Transverse colon (tissue), 4 donors: ENCODE measurements at regions of chr14 and their contacts with region 1.

Region 1: GRCh38 chr14:95561001-95561412 is 26.2 kb downstream of the GLRX5 start:
- DNase-seq: peak; percentile 91
- H3K4me3 ChIP-seq: no peak overlapping the region
- H3K27ac ChIP-seq: no peak overlapping the region
- H3K4me1 ChIP-seq: no peaks in the 10 kb centered on the region
- H3K27me3 ChIP-seq: no peaks in the 10 kb centered on the region
- CTCF ChIP-seq: peak; percentile 91 to 99 (median 96)
- EP300 ChIP-seq: no peak
- POLR2A ChIP-seq: no peak

Region 2: DNA sequence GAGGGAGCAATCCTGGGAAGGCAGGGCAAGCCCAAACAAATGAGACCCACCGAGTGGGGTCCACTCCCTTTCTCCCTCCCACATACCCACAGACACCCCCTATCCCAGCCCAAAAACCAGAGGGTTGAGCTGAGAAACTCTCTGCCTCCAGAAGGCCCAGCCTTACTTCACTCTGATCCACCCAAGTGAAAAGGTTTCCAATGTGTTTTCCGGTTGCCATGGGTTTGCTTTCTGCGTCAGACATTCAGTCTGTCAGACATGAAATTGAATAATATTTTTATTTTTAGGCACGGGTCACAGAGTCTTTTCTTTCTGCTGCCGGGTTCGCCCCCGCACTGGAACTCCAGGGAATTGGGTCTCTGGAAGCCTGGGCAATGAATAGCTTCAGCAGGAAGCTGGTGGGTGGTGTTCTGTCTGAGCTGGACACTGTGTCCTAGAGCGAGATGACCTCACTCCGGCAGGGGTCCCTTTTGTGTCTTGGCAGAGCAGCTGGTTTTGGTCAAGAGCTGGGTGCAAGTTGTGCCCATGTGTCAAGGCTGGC is 171.5 kb before region 1 on chr14:
- in situ Hi-C with region 1: no loop called
- intact Hi-C with region 1: no loop called
- DNase-seq: no peak
- H3K4me3 ChIP-seq: no peak overlapping the region
- H3K27ac ChIP-seq: no peak overlapping the region
- H3K4me1 ChIP-seq: no peaks in the 10 kb centered on the region
- H3K27me3 ChIP-seq: no peaks in the 10 kb centered on the region
- CTCF ChIP-seq: no peak
- EP300 ChIP-seq: peak; percentile 48
- POLR2A ChIP-seq: no peak

Region 3: DNA sequence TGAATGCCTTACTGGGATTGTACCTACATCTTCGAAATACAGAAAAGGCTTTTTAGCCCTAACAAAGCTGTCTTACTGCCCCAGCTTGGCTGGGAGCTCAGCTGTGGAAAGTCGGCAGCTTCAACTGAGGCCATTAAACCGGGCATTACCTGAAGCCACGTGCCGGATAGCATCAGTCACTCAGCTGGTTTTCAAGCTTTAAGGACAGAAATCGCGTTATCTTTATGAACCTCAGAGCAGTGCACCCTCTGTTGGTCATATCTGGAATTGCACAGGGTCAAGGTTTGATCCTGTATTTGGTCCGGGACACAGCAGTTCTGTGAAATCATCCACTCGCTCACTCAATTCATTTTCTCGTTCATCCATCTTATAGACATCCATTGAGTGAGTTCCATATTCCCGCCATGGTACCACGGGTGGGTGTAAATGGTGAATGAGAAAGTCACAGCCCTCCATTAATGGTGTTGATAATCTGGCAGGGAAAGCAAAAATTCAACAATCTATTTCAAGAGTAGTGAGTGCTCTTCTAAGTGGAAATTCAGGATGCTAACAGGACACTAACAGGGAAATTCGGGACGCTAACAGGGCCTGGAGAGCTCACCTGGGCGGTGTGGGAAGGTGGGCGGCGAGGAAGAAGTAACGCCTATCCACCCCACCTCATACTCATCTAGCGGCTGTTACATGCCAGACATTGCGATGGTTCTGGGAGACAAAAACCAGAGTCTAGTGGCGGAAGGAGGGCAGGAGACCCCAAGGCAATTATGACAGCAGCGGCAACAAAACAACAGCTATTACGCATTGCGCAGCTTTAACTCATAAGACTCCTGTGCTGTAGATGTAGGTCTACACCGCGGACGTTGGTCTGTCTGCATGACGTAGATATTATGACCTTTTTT is 213.5 kb after region 1 on chr14:
- in situ Hi-C with region 1: loop called in 2 of 4 experiments (anchors 10 kb)
- intact Hi-C with region 1: no loop called
- DNase-seq: peak; percentile 31
- H3K4me3 ChIP-seq: no peak overlapping the region
- H3K27ac ChIP-seq: no peak overlapping the region
- H3K4me1 ChIP-seq: no peaks in the 10 kb centered on the region
- H3K27me3 ChIP-seq: no peaks in the 10 kb centered on the region
- CTCF ChIP-seq: peak; percentile 69 to 86 (median 83)
- EP300 ChIP-seq: no peak
- POLR2A ChIP-seq: no peak

Region 4: GRCh38 chr14:95993768-95994592 is 433.0 kb after region 1 on chr14:
- in situ Hi-C with region 1: loop called (anchors 10 to 25 kb)
- intact Hi-C with region 1: loop called (anchors 5 kb)
- DNase-seq: no peak
- H3K4me3 ChIP-seq: no peak overlapping the region
- H3K27ac ChIP-seq: no peak overlapping the region
- H3K4me1 ChIP-seq: no peaks in the 10 kb centered on the region
- H3K27me3 ChIP-seq: peaks cover 19% of the 10 kb centered on the region
- CTCF ChIP-seq: peak; percentile 64 to 75 (median 70)
- EP300 ChIP-seq: no peak
- POLR2A ChIP-seq: no peak